ENCODE measurements at regions of chr2 and their contacts with region 1.

Region 1: DNA sequence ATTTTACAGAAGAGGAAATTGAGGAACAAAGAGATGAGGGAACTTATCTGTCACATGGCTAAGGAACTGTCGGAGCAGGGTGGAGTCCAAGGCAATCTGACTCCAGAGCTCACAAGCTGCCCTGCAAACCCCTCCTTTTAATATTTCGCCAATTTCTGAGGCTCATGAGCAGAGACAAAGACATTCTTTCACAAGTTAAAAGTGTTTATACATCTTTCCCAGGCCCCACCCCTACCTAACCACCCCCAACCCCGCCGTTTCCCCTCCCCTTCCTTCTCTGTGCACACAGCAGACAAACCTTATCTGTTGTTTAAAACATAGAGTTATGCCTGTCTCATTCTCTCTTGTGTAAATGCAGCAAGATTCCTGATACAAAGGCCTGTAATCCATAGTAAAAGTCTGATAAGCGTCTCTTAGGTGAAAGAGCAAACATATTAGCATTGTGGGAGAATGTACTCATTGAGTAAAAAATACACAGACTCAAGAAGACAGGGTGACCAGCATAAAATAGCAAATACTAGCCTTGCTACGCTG is 44.3 kb downstream of the EPHA4 start:
- DNase-seq: peak; percentile 86 to 93
- H3K4me3 ChIP-seq: no peak overlapping the region
- H3K4me3 Mint-ChIP-seq: peak overlapping the region; percentile 43
- H3K27ac Mint-ChIP-seq: peak overlapping the region; percentile 39
- H3K4me1 ChIP-seq: peaks cover 55% of the 10 kb centered on the region
- H3K4me1 Mint-ChIP-seq: peaks cover 48% of the 10 kb centered on the region
- H3K27me3 ChIP-seq: no peaks in the 10 kb centered on the region
- H3K27me3 Mint-ChIP-seq: no peaks in the 10 kb centered on the region
- CTCF ChIP-seq: no peak

Region 2: DNA sequence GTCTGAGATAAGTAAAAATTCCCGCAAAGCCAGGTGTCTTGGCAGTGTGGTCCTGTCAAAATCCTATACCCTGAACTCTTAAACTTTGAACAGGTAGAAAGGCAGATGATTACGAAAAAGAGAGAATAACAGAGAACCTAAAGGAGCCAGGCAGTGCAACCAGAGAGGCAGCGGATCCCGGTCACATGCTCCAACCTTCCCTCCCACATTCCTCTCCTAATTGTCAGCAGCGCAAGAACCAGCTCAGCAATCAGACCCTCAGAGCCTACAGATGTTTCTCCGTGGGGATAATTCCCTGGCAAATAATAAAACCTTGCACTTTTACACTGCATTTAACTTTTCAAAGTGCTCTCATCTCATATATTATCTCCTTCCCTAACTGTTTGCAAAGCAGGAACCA is 80.5 kb before region 1 on chr2:
- CTCF ChIA-PET with region 1: no interaction called
- POLR2A ChIA-PET with region 1: no interaction called
- intact Hi-C with region 1: loop called (anchors 1 kb)
- DNase-seq: peak; percentile 73 to 74
- H3K4me3 ChIP-seq: no peak overlapping the region
- H3K4me3 Mint-ChIP-seq: peak overlapping the region; percentile 55
- H3K27ac Mint-ChIP-seq: peak overlapping the region; percentile 65
- H3K4me1 ChIP-seq: peaks cover 21% of the 10 kb centered on the region
- H3K4me1 Mint-ChIP-seq: peaks cover 21% of the 10 kb centered on the region
- H3K27me3 ChIP-seq: no peaks in the 10 kb centered on the region
- H3K27me3 Mint-ChIP-seq: no peaks in the 10 kb centered on the region
- CTCF ChIP-seq: no peak

Region 3: DNA sequence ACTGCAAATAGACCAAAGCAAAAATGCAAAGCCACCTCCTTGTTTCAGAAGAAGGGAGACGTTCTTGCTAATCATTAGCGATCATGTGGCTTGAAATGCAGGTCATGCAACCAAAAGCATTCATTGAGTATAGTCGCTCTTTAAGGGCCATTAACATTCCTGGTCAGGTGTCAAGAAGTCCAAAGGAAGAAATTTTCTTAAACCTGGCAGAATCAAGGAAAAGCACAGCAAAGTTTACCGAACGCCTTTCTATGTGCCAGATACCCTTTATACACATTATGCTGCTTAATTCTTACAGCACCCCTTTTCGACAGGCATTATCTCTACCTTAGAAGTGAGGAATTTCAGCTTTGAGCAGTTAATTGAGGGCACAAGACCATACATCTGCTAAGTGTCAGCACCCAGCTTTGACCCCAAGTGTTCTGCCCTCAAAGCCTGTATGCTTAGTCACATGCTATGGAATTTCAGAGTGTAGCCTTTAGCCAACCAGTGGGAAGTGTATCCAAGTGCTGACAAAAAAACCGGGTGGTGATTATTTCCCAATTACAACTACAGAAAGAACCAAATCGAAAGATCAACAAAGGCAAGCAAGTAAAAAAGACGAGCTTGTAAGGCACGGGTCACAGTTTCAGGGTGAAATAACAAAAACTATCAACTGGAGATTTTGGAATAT is 26.5 kb before region 1 on chr2:
- CTCF ChIA-PET with region 1: no interaction called
- POLR2A ChIA-PET with region 1: no interaction called
- intact Hi-C with region 1: loop called (anchors 1 kb)
- DNase-seq: peak in 1 of 2 experiments; percentile 21
- H3K4me3 ChIP-seq: no peak overlapping the region
- H3K4me3 Mint-ChIP-seq: no peak overlapping the region
- H3K27ac Mint-ChIP-seq: peak overlapping the region; percentile 5
- H3K4me1 ChIP-seq: peaks cover 31% of the 10 kb centered on the region
- H3K4me1 Mint-ChIP-seq: peaks cover 28% of the 10 kb centered on the region
- H3K27me3 ChIP-seq: no peaks in the 10 kb centered on the region
- H3K27me3 Mint-ChIP-seq: no peaks in the 10 kb centered on the region
- CTCF ChIP-seq: no peak

Region 4: DNA sequence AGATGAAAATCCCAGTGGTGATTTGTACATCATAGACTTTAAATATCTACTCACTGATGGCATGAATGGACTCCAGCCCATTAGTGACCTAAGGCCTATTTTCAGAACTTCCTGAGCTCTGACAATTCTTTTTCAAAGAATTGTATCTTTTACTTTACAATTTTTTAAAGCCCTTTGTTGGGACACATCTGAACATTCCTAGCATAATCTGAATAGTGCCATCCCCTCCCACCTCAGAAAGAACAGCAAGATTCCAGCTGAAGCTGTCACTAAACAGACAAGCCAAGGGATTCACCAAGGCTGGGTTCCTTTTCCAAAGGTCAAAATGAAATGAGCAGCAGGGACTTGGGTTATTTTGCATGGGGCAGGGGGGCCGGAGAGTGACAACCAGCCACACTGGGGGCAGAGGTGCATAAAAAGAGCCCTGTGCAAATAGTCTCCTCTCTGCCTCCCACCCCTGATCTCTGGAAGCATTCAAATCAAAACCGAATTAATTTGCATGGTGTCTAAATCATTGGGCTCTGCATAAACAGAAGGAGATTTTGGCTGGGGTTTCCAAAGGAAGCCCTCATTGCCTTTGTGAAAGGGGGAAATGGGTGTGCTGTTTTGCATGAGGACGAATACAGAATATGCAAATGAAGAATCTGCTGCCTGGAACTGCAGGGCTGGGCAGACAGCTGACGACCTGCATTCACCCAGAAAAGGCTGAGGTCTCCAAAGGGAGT is 27.1 kb after region 1 on chr2:
- CTCF ChIA-PET with region 1: interaction called, 3 read pairs
- POLR2A ChIA-PET with region 1: no interaction called
- intact Hi-C with region 1: loop called (anchors 1 kb)
- DNase-seq: peak; percentile 60 to 70
- H3K4me3 ChIP-seq: no peak overlapping the region
- H3K4me3 Mint-ChIP-seq: peak overlapping the region; percentile 65
- H3K27ac Mint-ChIP-seq: peak overlapping the region; percentile 84
- H3K4me1 ChIP-seq: peaks cover 60% of the 10 kb centered on the region
- H3K4me1 Mint-ChIP-seq: peaks cover 61% of the 10 kb centered on the region
- H3K27me3 ChIP-seq: no peaks in the 10 kb centered on the region
- H3K27me3 Mint-ChIP-seq: no peaks in the 10 kb centered on the region
- CTCF ChIP-seq: no peak

Region 5: DNA sequence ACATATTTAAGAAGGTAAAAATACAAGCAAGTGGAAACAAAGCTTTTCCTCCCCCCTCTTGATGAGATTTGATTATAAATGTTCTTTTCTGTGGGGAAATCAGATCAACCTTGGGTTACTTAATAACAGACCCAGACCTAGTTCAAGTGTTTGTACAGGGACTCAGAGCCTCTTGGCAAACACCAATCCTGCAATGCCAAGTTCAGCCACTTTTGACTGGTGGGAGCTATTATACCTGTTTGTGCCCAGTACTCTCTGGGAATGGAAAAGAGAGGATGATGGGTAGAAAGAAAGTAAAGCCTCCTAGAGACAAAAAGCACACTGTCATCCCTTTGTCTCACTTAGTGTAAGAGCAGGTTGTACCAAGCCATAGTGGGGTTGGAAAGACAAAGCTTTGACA is 108.1 kb after region 1 on chr2:
- CTCF ChIA-PET with region 1: no interaction called
- POLR2A ChIA-PET with region 1: no interaction called
- intact Hi-C with region 1: no loop called
- DNase-seq: peak in 1 of 2 experiments; percentile 31
- H3K4me3 ChIP-seq: no peak overlapping the region
- H3K4me3 Mint-ChIP-seq: no peak overlapping the region
- H3K27ac Mint-ChIP-seq: no peak overlapping the region
- H3K4me1 ChIP-seq: no peaks in the 10 kb centered on the region
- H3K4me1 Mint-ChIP-seq: no peaks in the 10 kb centered on the region
- H3K27me3 ChIP-seq: no peaks in the 10 kb centered on the region
- H3K27me3 Mint-ChIP-seq: no peaks in the 10 kb centered on the region
- CTCF ChIP-seq: peak; percentile 28 to 38